ENCODE measurements at regions of chr2 and their contacts with region 1.

Region 1: GRCh38 chr2:85390941-85391669 is 19.1 kb downstream of the CAPG start:
- DNase-seq: peak; percentile 36 to 97
- H3K4me3 ChIP-seq: no peak overlapping the region
- H3K27ac ChIP-seq: no peak overlapping the region
- H3K4me1 ChIP-seq: peaks cover 0 to 6% (median 3%) of the 10 kb centered on the region in 4 experiments; a peak in 4 of 7 replicates
- H3K27me3 ChIP-seq: no peaks in the 10 kb centered on the region; a peak in 1 of 7 replicates
- CTCF ChIP-seq: peak; percentile 89 to 94 (median 94)
- EP300 ChIP-seq: no peak
- POLR2A ChIP-seq: no peak
- RAD21 ChIP-seq: peak; percentile 95 to 97

Region 2: DNA sequence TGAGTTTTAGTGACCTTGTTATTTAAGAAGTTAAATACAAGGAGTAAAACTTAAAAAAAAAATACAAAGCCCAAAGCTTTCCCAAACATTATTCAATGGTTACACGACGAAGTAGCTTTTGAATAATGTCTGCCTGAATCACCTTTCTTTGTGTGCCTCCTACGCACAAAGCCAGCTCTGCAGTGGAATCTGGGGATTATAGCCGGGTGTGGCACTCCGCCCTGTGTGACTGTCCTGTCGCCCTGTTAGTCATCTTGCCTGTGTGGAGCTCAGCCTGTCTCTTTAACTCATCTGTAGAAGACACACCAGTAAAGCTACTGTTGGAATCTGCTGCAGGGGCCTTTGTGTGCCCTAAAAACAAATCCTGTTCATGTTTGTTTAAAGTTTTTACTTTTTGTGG is 337.3 kb before region 1 on chr2:
- CTCF ChIA-PET with region 1: no interaction called
- POLR2A ChIA-PET with region 1: no interaction called
- DNase-seq: no peak
- H3K4me3 ChIP-seq: no peak overlapping the region
- H3K27ac ChIP-seq: no peak overlapping the region
- H3K4me1 ChIP-seq: peaks cover 0 to 4% (median 0%) of the 10 kb centered on the region in 4 experiments; a peak in 3 of 7 replicates
- H3K27me3 ChIP-seq: no peaks in the 10 kb centered on the region
- CTCF ChIP-seq: no peak
- EP300 ChIP-seq: no peak
- POLR2A ChIP-seq: no peak; a peak in 1 of 3 replicates
- RAD21 ChIP-seq: no peak

Region 3: GRCh38 chr2:85369500-85369899 is 21.6 kb before region 1 on chr2:
- CTCF ChIA-PET with region 1: interaction called, 14 read pairs
- POLR2A ChIA-PET with region 1: interaction called, 3 read pairs
- DNase-seq: no peak
- H3K4me3 ChIP-seq: no peak overlapping the region
- H3K27ac ChIP-seq: no peak overlapping the region
- H3K4me1 ChIP-seq: no peaks in the 10 kb centered on the region
- H3K27me3 ChIP-seq: no peaks in the 10 kb centered on the region
- CTCF ChIP-seq: no peak
- EP300 ChIP-seq: no peak
- POLR2A ChIP-seq: no peak
- RAD21 ChIP-seq: no peak

Region 4: GRCh38 chr2:85401850-85402243 is 10.7 kb after region 1 on chr2:
- CTCF ChIA-PET with region 1: interaction called, 58 read pairs
- POLR2A ChIA-PET with region 1: interaction called, 4 read pairs
- DNase-seq: no peak
- H3K4me3 ChIP-seq: no peak overlapping the region
- H3K27ac ChIP-seq: no peak overlapping the region
- H3K4me1 ChIP-seq: peaks cover 0 to 2% (median 0%) of the 10 kb centered on the region in 4 experiments; a peak in 1 of 7 replicates
- H3K27me3 ChIP-seq: no peaks in the 10 kb centered on the region
- CTCF ChIP-seq: no peak
- EP300 ChIP-seq: no peak
- POLR2A ChIP-seq: no peak
- RAD21 ChIP-seq: no peak

Region 5: GRCh38 chr2:85409845-85410583 is 18.9 kb after region 1 on chr2 and contains the start of gene CAPG:
- CTCF ChIA-PET with region 1: interaction called, 58 read pairs
- POLR2A ChIA-PET with region 1: interaction called, 5 read pairs
- DNase-seq: peak in 1 of 2 experiments; percentile 53
- H3K4me3 ChIP-seq: peak within 1 kb of the TSS in 1 of 4 experiments; percentile 28; a peak in 1 of 8 replicates
- H3K27ac ChIP-seq: no peak within 1 kb of the TSS
- H3K4me1 ChIP-seq: peaks cover 5 to 19% (median 15%) of the 10 kb centered on the region in 4 experiments
- H3K27me3 ChIP-seq: peaks cover 0 to 3% (median 1%) of the 10 kb centered on the region in 4 experiments; a peak in 1 of 7 replicates
- CTCF ChIP-seq: no peak
- EP300 ChIP-seq: no peak
- POLR2A ChIP-seq: no peak
- RAD21 ChIP-seq: no peak
- total RNA-seq, gene CAPG: 78.6 and 80.5 TPM in 2 replicates